ENCODE measurements at regions of chr17 and their contacts with region 1.

Region 1: GRCh38 chr17:49861150-49861892 is 13.5 kb upstream of the TAC4 start:
- DNase-seq: no peak
- H3K4me3 ChIP-seq: no peak overlapping the region
- H3K27ac ChIP-seq: no peak overlapping the region
- H3K4me1 ChIP-seq: peaks cover 0 to 6% (median 5%) of the 10 kb centered on the region in 4 donors
- H3K27me3 ChIP-seq: peaks cover 0 to 19% (median 0%) of the 10 kb centered on the region in 4 donors
- CTCF ChIP-seq: peak; percentile 78 to 94 (median 80)
- EP300 ChIP-seq: no peak
- POLR2A ChIP-seq: no peak

Region 2: GRCh38 chr17:49959183-49959935 is 98.0 kb after region 1 on chr17:
- intact Hi-C with region 1: loop called (anchors 5 kb)
- DNase-seq: no peak
- H3K4me3 ChIP-seq: no peak overlapping the region
- H3K27ac ChIP-seq: no peak overlapping the region
- H3K4me1 ChIP-seq: peaks cover 9 to 14% (median 9%) of the 10 kb centered on the region in 4 donors
- H3K27me3 ChIP-seq: peaks cover 0 to 63% (median 23%) of the 10 kb centered on the region in 4 donors
- CTCF ChIP-seq: no peak
- EP300 ChIP-seq: no peak
- POLR2A ChIP-seq: no peak

Measured in esophagus muscularis mucosa (tissue), 4 donors.